ENCODE measurements at regions of chr5 and their contacts with region 1.

Region 1: GRCh38 chr5:115625579-115626444 is at the start of gene TMED7:
- DNase-seq: peak; percentile 100
- ATAC-seq: peak; percentile 92
- H3K4me3 Mint-ChIP-seq: no peak within 1 kb of the TSS
- H3K27ac Mint-ChIP-seq: peak within 1 kb of the TSS; percentile 94
- H3K4me1 Mint-ChIP-seq: peaks cover 25% of the 10 kb centered on the region
- H3K27me3 Mint-ChIP-seq: no peaks in the 10 kb centered on the region
- total RNA-seq, gene TMED7: 31.4 to 36.8 TPM

Region 2: DNA sequence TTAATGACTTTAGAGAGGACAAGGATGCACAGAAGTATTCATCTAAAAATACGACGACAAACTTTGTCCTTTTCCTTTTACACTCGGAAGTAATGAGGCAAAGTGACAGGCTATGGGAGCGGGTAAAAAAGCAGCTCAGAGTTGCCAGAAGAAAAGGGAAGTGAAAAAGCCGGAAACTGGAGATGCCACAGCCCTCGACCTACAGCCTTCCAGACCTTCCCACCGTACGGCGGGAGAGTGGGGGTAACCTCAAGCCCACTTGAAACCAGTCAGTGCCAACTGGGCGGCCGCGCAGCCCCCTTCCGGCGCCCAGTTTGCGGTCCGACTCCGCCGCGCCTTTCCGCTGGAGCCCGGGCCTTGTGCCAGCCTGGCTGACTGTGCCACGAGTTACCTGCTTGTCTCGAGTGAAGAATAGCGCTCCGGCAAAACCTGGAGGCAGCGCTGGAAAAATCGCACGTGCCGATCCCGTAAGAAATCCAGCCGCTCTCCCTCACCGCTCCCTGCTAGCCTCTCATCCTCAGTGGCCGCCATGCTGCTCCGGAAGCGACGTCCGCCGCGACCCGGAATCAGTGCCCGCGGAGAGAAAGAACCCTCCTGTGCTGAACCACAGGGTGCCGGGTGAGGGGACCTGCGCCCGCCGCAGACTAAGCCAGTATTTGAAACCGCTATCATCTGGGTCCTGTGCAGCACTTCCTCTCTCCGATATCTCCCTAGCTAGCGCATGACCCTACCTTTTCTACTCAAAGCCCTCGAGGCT is 363.3 kb before region 1 on chr5 and contains the start of gene PGGT1B:
- CTCF ChIA-PET with region 1: no interaction called
- POLR2A ChIA-PET with region 1: no interaction called
- intact Hi-C with region 1: loop called in 1 of 2 experiments (anchors 1 kb)
- DNase-seq: peak; percentile 86
- ATAC-seq: peak; percentile 97
- H3K4me3 Mint-ChIP-seq: peak within 1 kb of the TSS; percentile 89
- H3K27ac Mint-ChIP-seq: peak within 1 kb of the TSS; percentile 95
- H3K4me1 Mint-ChIP-seq: peaks cover 45% of the 10 kb centered on the region
- H3K27me3 Mint-ChIP-seq: no peaks in the 10 kb centered on the region
- total RNA-seq, gene PGGT1B: 38.9 to 44.3 TPM

Region 3: GRCh38 chr5:115296124-115297022 is 329.4 kb before region 1 on chr5 and contains the start of gene CCDC112:
- CTCF ChIA-PET with region 1: interaction called, 3 read pairs
- POLR2A ChIA-PET with region 1: no interaction called
- intact Hi-C with region 1: loop called in 1 of 2 experiments (anchors 1 kb)
- DNase-seq: peak; percentile 94
- ATAC-seq: peak; percentile 93
- H3K4me3 Mint-ChIP-seq: peak within 1 kb of the TSS; percentile 77
- H3K27ac Mint-ChIP-seq: peak within 1 kb of the TSS; percentile 44
- H3K4me1 Mint-ChIP-seq: peaks cover 7% of the 10 kb centered on the region
- H3K27me3 Mint-ChIP-seq: peaks cover 3% of the 10 kb centered on the region
- total RNA-seq, gene CCDC112: 2.2 to 4.1 TPM

Region 4: DNA sequence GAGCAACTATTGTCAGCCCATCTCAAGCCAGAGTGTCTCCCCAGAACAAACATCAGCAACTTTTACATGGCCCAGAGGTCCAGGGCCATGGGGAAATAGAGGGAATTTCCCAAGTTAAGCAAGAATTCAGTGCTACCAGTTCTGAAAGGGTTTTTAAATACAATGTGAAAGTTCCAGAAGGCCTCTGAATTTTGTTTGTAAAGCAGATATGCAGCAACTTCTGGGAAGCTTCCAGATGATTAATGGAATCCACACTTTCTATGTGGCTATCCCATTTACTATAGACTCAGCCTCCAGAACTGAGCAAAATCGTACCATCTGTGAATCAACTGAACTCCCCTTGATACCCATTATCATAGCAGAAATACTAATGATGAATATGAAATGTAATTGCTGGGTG is 175.1 kb before region 1 on chr5:
- CTCF ChIA-PET with region 1: no interaction called
- POLR2A ChIA-PET with region 1: no interaction called
- intact Hi-C with region 1: no loop called
- DNase-seq: no peak
- ATAC-seq: peak; percentile 33
- H3K4me3 Mint-ChIP-seq: no peak overlapping the region
- H3K27ac Mint-ChIP-seq: no peak overlapping the region
- H3K4me1 Mint-ChIP-seq: peaks cover 3% of the 10 kb centered on the region
- H3K27me3 Mint-ChIP-seq: peaks cover 14% of the 10 kb centered on the region

Region 5: DNA sequence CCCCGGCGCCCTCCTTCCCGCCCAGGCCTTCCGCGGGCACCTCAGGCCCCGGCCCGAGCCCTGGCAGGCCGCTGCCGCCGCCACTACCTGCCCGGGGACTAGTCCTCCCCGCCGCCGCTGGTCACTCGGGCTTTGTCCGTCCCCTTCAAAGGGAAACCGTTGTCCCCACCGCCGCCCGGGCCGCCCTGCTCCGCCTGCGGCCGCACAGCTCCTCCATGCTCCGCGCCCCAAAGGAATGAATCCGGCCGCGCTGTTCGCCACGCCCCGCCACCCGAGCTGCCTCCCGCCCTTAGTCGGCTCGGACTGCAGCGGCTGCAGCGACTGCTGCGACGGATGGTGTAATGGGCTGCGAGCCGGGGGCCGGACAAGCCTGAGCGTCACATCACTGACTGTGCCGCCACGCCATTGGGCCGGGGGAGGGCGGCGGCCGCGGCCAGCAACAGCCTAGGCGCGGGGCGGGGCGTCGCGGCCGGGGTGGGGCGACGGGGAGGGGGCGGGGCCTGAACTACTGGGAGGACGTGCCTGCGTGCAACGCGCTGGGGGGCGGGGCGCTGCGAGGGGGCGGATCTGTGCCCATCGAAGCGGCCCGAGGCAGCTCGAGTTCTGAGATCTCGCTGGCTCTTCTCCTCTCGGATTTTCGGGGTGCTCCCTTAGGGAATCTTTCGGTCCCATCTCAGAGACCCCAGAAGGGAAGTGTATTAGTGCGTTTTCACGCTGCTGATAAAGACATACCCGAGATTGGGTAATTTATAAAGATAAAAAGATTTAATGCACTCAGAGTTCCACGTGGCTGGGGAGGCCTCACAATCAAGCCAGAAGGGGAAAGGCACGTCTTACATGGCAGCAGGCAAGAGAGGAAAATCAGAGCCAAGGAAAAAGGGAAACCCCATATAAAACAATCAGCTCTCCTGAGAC is 81.1 kb before region 1 on chr5 and contains the start of gene FEM1C:
- CTCF ChIA-PET with region 1: no interaction called
- POLR2A ChIA-PET with region 1: interaction called, 7 read pairs
- intact Hi-C with region 1: loop called (anchors 1 to 2 kb)
- DNase-seq: peak; percentile 100
- ATAC-seq: peak; percentile 93
- H3K4me3 Mint-ChIP-seq: peak within 1 kb of the TSS; percentile 96
- H3K27ac Mint-ChIP-seq: peak within 1 kb of the TSS; percentile 97
- H3K4me1 Mint-ChIP-seq: peaks cover 41% of the 10 kb centered on the region
- H3K27me3 Mint-ChIP-seq: no peaks in the 10 kb centered on the region
- total RNA-seq, gene FEM1C: 15.8 to 15.9 TPM

Region 6: DNA sequence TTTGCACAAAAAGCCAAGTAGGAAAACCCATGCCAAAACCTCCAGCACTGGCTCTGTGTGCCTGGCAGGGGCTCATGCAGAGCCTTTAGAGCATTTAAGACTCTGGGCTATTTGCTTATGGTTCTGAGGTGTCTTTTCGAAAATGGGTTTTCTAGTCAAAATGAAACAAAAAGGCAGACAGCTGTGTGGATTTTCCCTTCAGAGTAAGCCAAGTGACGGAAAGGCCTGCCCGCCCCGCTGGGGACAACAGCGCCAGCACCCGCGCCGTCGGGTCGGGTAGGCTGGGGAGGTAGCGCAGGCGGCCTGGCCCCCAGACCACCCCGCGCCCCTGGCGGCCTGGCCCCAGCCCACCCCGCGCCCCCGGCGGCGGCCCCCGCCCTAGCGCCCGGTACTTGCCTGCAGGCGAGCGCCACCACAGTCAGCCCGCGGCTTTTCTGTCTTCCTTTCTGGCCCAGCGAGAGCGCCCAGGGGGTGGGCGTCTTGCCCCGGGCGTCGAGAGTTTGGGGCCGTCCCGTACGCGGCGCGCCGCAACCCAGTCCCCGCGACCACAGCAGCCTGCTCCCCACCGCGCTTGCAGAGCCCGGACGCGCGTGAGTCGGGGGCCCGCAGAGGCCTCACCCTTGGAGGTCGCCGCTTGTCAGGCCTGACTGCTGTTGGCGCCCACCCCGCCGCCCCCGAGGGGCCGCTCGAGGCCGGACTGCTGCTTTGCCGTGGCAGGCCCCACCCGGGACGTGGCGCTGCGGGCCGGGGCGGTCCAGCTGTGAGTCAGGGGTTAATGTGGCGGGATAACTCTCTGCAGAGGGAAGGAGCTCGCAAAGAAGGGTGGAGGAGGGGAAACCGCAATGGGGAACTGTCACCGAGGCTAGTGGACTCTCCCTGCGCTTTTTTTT is 23.9 kb before region 1 on chr5 and contains the start of gene TICAM2:
- CTCF ChIA-PET with region 1: no interaction called
- POLR2A ChIA-PET with region 1: interaction called, 3 read pairs
- intact Hi-C with region 1: loop called (anchors 1 to 2 kb)
- DNase-seq: peak; percentile 81
- ATAC-seq: peak; percentile 91
- H3K4me3 Mint-ChIP-seq: peak within 1 kb of the TSS; percentile 61
- H3K27ac Mint-ChIP-seq: peak within 1 kb of the TSS; percentile 86
- H3K4me1 Mint-ChIP-seq: peaks cover 37% of the 10 kb centered on the region
- H3K27me3 Mint-ChIP-seq: no peaks in the 10 kb centered on the region
- total RNA-seq, gene TICAM2: 0.87 to 1.7 TPM

Region 7: DNA sequence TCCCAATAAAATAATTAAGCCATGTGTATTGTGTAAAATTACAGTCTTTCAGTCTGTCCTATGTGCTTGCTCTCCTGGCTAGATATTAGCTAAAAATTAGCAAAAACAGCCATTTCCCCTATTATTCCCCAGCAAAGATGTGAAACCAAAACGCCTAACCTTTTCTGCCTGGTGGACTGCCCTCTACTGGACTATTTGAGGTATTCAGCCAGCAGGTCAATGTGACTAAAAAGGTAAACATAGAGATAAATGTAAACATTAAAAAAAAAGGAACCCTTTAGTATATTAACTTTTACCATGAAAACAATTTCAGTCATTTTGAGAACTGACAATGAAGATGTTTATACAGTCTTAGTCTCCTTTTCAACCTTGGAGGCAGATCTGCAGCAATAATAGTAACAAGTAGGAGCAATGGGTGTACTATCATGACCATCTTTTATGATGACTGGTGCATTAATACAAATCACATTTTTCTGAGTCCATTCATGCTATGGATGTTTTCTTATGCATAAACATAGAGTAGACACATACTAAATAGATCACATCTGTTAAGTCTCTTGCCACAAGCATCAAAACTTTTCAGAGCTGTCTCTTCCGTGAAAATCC is 205.5 kb after region 1 on chr5:
- CTCF ChIA-PET with region 1: interaction called, 11 read pairs
- POLR2A ChIA-PET with region 1: no interaction called
- intact Hi-C with region 1: no loop called
- DNase-seq: peak; percentile 30
- ATAC-seq: peak; percentile 60
- H3K4me3 Mint-ChIP-seq: no peak overlapping the region
- H3K27ac Mint-ChIP-seq: no peak overlapping the region
- H3K4me1 Mint-ChIP-seq: peaks cover 4% of the 10 kb centered on the region
- H3K27me3 Mint-ChIP-seq: no peaks in the 10 kb centered on the region

Region 8: GRCh38 chr5:116084871-116085715 is 459.3 kb after region 1 on chr5 and contains the start of gene COMMD10:
- CTCF ChIA-PET with region 1: interaction called, 3 read pairs
- POLR2A ChIA-PET with region 1: interaction called, 4 read pairs
- intact Hi-C with region 1: loop called (anchors 1 to 5 kb)
- DNase-seq: peak; percentile 86
- ATAC-seq: peak; percentile 87
- H3K4me3 Mint-ChIP-seq: peak within 1 kb of the TSS; percentile 88
- H3K27ac Mint-ChIP-seq: peak within 1 kb of the TSS; percentile 94
- H3K4me1 Mint-ChIP-seq: peaks cover 50% of the 10 kb centered on the region
- H3K27me3 Mint-ChIP-seq: no peaks in the 10 kb centered on the region
- total RNA-seq, gene COMMD10: 19.7 to 23.0 TPM

Measured in activated CD4-positive, alpha-beta T cell treated with anti-CD3 and anti-CD28 coated beads for 36 hours (primary cell).